ENCODE measurements at regions of chr15 and their contacts with region 1.

Region 1: GRCh38 chr15:50686468-50687301 is at the start of gene TRPM7:
- DNase-seq: peak; percentile 86
- H3K4me3 Mint-ChIP-seq: peak within 1 kb of the TSS; percentile 97
- H3K27ac Mint-ChIP-seq: peak within 1 kb of the TSS; percentile 98
- H3K4me1 Mint-ChIP-seq: peaks cover 47% of the 10 kb centered on the region
- H3K27me3 Mint-ChIP-seq: no peaks in the 10 kb centered on the region
- total RNA-seq, gene TRPM7: 42.4 and 43.6 TPM in 2 replicates

Region 2: DNA sequence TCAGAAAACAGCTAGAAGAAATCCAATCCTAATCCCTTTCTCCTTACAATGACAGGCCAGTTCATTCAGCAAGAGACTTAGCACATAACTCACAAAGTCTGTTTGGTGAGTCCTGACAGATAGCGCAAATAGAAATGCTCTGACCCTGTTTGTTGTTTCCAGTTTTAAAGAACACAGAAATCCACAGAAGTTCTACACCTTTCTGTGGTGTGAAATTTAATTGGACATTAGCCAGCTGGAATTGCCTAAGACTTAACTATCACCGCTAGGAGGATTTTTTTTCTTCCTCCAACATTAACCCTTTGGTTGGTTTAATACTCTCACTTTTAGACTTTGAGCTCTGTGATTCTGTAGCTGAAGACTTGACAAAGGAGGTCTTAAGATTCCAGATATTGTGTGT is 451.9 kb before region 1 on chr15:
- intact Hi-C with region 1: no loop called
- DNase-seq: no peak
- H3K4me3 Mint-ChIP-seq: no peak overlapping the region
- H3K27ac Mint-ChIP-seq: no peak overlapping the region
- H3K4me1 Mint-ChIP-seq: peaks cover 6% of the 10 kb centered on the region
- H3K27me3 Mint-ChIP-seq: no peaks in the 10 kb centered on the region

Region 3: DNA sequence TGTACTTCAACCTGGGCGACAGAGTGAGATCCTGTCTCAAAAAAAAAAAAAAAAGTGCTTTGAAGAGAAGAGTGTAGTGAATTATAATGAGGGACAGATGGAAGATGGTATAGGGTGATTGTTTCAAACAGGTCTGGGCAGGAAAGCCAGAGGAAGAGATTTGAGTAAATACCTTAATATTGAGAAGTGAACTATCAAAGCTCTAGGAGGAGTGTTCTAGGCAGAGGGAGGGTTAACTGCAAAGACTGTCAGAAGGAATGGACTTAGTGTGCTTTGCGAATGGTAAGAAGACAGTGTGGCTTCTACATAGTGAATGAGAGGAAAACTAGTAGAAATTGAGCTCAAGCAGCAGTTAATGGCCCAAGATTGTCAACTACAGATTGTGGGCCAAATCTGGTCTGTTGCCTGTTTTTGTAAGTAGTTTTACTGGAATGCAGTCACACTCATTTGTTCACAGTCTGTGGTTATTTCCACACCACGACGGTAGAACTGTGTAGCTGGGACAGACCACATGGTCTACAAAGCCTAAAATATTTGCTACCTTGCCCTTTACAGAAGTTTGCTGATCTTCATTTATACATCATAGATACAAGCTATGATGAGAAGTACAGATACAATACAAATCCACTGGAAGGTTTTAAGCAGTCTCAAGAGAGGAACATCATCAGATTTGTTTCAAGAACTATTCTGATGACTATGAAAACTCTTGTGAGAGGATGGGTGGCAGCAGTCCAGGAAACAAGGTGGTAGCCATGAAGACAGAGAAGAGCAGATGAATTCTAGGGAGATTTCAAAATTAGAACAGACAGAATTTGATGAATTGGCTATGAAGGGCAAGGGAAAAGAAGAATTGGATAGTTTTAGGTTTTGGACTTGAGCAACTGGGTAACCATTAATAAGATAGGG is 123.7 kb before region 1 on chr15:
- intact Hi-C with region 1: loop called (anchors 5 kb)
- DNase-seq: peak; percentile 8
- H3K4me3 Mint-ChIP-seq: peak overlapping the region; percentile 16
- H3K27ac Mint-ChIP-seq: peak overlapping the region; percentile 87
- H3K4me1 Mint-ChIP-seq: peaks cover 25% of the 10 kb centered on the region
- H3K27me3 Mint-ChIP-seq: no peaks in the 10 kb centered on the region

Region 4: DNA sequence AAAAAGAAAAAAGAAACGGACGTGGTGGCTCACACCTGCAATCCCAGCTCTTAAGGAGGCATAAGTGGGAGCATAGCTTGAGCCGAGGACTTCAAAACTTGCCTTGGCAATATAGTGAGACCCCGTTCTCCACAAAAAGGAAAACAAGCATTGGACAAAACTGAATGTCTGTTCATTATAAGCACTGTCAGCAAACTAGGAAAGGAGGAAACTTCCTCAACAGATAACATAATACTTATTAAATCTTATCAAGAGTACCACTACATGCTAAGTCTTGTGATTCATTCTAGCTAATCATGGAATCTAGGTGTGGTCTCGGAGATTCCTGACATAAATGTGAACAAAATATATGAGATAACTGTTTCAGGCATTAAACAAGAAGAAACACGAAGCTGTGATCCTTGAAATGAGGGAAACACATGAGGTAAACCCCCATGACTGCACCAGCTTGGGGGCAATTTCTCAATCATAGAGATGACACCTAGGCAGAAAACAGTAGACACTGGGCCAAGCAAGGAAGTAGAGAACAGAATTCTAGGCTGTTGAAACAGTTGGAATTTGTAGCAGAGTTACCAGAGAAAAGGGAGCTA is 33.4 kb before region 1 on chr15:
- intact Hi-C with region 1: loop called (anchors 1 kb)
- DNase-seq: no peak
- H3K4me3 Mint-ChIP-seq: no peak overlapping the region
- H3K27ac Mint-ChIP-seq: no peak overlapping the region
- H3K4me1 Mint-ChIP-seq: peaks cover 7% of the 10 kb centered on the region
- H3K27me3 Mint-ChIP-seq: no peaks in the 10 kb centered on the region

Region 5: DNA sequence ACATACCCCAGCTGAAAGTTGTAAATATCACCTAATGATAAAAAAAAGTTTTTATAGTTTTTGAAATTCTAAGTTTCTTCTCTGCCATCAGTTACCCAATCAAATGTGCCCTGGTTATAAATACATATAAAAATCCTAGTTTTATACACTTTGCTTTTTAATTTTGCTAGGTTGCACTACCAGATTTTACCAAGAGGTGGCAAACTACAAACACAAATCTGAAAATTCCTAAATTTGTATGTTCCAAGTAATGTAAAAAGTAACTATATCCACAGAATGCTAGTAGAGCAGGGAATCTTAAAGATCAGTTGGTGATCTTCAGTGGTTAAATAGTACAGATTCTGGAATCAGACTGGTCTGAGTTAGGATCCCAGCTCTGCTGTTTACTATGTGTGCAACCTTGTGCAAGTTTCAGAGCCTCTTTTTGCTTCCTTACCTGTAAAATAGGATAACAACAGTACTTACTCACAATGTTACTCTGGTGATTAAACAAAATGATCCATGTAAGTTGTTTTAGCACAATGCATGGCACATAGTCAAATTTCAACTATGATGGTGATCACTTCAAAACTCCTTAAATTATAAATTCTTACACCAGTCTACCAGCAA is 11.0 kb before region 1 on chr15:
- intact Hi-C with region 1: loop called (anchors 1 kb)
- DNase-seq: no peak
- H3K4me3 Mint-ChIP-seq: no peak overlapping the region
- H3K27ac Mint-ChIP-seq: no peak overlapping the region
- H3K4me1 Mint-ChIP-seq: peaks cover 15% of the 10 kb centered on the region
- H3K27me3 Mint-ChIP-seq: no peaks in the 10 kb centered on the region

Region 6: DNA sequence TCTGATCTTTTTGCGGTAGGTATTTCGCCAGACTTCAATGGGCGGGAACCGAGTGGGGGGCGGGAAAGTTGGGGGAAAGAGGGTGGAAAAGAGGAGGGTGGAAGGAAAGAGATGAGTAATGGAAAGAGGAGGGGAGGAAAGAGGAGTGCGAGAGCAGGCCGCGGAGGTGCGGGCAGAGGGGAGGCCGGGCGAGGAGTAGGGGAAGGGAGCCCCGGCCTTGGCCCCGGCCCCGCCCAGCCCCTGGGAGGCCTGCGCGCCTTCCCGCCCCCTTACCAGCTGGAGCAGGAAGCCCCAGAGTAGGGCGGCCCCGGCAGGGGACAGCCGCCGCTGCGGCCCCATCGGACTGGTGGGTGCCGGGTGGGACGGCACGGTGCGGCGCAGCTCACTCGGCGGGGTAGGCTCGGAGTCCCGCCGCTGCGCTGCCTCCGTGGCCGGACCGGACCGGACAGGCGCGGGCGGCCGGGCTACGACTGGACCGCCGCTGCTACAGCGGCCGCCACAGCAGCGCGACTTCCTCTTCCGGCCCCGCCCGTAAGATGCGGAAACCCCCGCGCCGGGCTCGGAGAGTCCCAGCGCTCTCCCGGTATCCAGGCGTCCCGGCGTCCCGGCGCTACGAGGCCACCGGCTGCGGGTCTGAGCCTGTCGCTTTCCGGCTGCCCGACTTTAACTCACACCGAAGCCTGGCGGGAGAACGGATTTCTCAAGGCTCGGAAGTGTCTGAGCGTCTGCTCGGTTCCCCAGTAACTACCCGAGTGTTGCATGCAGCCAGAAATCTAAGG is 78.7 kb after region 1 on chr15 and contains the start of gene SPPL2A:
- intact Hi-C with region 1: loop called (anchors 1 kb)
- DNase-seq: peak; percentile 77
- H3K4me3 Mint-ChIP-seq: peak within 1 kb of the TSS; percentile 96
- H3K27ac Mint-ChIP-seq: peak within 1 kb of the TSS; percentile 97
- H3K4me1 Mint-ChIP-seq: peaks cover 69% of the 10 kb centered on the region
- H3K27me3 Mint-ChIP-seq: no peaks in the 10 kb centered on the region
- total RNA-seq, gene SPPL2A: 100 and 103 TPM in 2 replicates